Panc1 (cell line): ENCODE measurements at regions of chr5 and their contacts with region 1.

Region 1: GRCh38 chr5:153147891-153148623 is 342.4 kb upstream of the GRIA1 start:
- DNase-seq: peak; percentile 10
- ATAC-seq: peak; percentile 80
- H3K4me3 ChIP-seq: no peak overlapping the region
- H3K27ac ChIP-seq: no peak overlapping the region
- H3K4me1 ChIP-seq: no peaks in the 10 kb centered on the region
- H3K27me3 ChIP-seq: no peaks in the 10 kb centered on the region
- CTCF ChIP-seq: peak; percentile 72

Region 2: DNA sequence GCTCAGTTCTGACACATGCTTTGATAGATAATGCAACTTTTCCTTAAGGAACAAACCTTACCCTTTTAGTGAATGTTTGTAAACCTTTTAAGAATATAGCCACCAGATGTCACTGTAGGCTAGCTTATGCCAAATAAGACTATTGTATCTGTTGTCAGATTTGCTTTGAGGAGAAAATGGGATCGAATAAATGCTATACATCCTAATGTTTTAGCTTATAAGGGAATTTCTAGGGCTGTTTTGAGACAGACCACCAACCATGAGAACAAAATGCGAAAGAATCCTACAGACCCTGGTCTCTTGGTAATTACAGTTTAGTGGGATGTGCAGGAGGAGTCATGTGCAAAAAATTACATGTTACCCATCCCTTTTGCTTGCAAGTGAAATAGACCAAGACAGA is 615.3 kb before region 1 on chr5:
- CTCF ChIA-PET with region 1: no interaction called
- POLR2A ChIA-PET with region 1: no interaction called
- in situ Hi-C with region 1: no loop called
- intact Hi-C with region 1: loop called (anchors 10 kb)
- DNase-seq: peak; percentile 27
- ATAC-seq: peak; percentile 86
- H3K4me3 ChIP-seq: no peak overlapping the region
- H3K27ac ChIP-seq: no peak overlapping the region
- H3K4me1 ChIP-seq: no peaks in the 10 kb centered on the region
- H3K27me3 ChIP-seq: peaks cover 2% of the 10 kb centered on the region; the same call in 1 of the 2 replicates
- CTCF ChIP-seq: peak; percentile 55

Region 3: DNA sequence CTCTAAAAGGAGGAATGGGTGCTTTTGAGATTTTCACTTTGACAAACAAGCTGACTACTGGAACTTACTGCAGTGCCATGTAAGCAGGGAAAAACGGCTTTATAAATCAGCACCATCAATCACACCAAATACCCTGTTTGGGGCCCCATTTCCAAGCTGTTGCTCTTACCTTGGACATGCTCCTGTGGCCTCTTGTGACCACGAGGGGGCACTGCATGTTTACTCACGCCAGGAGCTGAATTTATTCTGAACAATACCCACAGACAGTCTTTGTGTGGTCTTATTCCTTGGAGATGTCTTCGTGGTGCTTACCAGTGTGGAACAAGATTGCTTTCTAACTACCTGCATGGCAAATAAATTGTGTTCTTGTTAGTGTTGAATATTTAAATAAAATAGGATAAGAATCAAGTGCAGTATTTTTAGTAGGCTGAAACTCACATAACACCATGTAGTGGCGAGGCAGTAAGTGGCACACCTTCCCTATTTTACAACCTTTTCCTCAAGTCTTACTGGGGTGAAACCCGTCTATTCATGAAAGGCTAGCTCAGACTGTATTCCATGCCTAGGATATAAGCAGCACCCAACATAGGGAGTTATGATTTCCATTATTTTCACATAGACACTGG is 587.4 kb before region 1 on chr5:
- CTCF ChIA-PET with region 1: no interaction called
- POLR2A ChIA-PET with region 1: no interaction called
- in situ Hi-C with region 1: no loop called
- intact Hi-C with region 1: loop called (anchors 5 kb)
- DNase-seq: peak; percentile 18
- ATAC-seq: peak; percentile 56; the same call in 1 of the 2 replicates
- H3K4me3 ChIP-seq: no peak overlapping the region
- H3K27ac ChIP-seq: no peak overlapping the region
- H3K4me1 ChIP-seq: no peaks in the 10 kb centered on the region
- H3K27me3 ChIP-seq: no peaks in the 10 kb centered on the region
- CTCF ChIP-seq: peak; percentile 80

Region 4: DNA sequence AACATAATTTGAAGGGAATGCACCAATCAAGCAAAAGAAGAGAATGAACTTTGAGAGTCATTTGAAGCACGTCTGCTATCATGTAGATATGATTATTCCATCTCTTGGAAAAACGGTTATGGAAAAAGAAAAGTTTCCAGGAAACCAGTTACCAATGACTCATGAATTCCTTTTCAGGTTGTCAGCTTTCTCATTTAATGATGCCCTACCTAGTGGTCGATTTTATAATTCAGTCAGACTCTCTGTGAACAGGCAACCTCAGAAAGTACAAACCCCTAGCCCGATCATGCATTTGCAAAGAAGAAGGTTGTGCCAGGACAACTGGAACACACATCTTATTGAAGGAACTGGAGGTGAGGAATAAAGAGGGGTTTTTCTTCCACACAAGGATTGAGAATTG is 12.6 kb before region 1 on chr5:
- CTCF ChIA-PET with region 1: no interaction called
- POLR2A ChIA-PET with region 1: no interaction called
- in situ Hi-C with region 1: no loop called
- intact Hi-C with region 1: no loop called
- DNase-seq: no peak
- ATAC-seq: no peak
- H3K4me3 ChIP-seq: no peak overlapping the region
- H3K27ac ChIP-seq: no peak overlapping the region
- H3K4me1 ChIP-seq: no peaks in the 10 kb centered on the region
- H3K27me3 ChIP-seq: no peaks in the 10 kb centered on the region
- CTCF ChIP-seq: no peak